ENCODE measurements at regions of chr1 and their contacts with region 1.

Region 1: DNA sequence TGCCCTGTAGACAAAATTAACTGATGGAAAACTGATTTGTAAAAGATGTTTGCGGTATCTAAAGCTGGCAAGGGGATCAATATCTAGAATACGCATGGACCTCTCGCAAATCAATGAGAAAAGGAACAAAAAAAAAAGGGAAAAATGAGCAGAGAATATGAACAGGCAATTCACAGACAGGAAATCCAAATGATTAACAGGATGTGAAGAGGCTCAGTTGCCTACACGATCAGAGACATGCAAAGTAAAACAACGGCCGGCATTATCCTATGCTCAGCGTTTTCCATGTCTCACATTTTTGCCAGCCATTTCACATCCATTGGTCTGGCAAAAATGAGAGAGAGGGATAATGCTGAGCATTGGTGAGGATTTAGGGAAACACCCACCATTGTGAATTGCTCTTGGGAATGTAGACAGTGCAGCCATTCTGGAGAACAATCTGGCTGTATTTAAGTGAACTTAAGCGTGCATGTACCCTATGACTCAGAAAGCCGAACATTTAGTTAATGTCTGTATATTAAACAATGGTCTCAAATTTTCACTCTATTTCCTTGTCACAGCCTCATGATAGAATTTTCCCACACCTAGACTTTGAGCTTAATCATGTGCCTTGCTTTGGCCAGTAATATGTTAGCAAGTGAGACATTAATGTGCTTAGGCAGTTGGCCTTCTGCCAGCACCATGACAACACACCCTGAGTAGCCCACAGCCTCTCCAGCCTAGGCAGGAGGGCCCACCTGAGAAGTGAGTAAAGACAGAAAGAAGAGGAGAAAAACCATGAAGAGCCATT is 61.0 kb upstream of the NBPF3 start:
- DNase-seq: peak in 2 of 4 experiments; percentile 31 to 64
- ATAC-seq: peak; percentile 83
- H3K4me3 ChIP-seq: no peak overlapping the region
- H3K27ac ChIP-seq: no peak overlapping the region
- H3K4me1 ChIP-seq: peaks cover 0 to 3% of the 10 kb centered on the region in 2 experiments; a peak in 1 of 5 replicates
- H3K27me3 ChIP-seq: peaks cover 4 to 7% of the 10 kb centered on the region in 2 experiments; a peak in 2 of 5 replicates
- CTCF ChIP-seq: no peak
- EP300 ChIP-seq: no peak
- POLR2A ChIP-seq: no peak
- RAD21 ChIP-seq: no peak

Region 2: DNA sequence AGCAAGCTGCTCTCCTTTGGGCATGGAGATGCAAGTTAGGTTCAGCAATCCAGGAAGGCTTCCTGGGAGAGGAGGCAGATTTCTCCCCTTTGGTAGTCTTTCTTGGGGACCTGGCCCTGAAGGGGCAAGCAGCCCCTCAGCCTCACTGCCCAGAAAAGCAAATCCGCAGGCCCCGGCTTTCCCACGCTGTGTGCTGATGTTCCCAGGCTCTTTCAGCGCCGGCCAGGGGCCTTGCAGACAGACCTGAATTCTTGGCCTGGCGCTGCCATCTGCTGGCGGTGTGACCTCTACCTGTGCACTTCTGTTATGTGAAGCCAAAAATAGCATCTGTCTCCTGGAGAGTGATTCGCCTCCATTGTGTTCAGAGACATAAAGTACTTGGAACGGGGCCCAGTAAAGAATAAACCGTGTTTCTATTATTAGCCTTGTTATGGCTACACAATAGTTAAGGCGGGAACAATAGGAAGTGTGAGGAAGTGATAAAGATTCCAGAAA is 195.1 kb after region 1 on chr1:
- CTCF ChIA-PET with region 1: no interaction called
- POLR2A ChIA-PET with region 1: no interaction called
- in situ Hi-C with region 1: no loop called
- intact Hi-C with region 1: loop called (anchors 10 kb)
- DNase-seq: peak; percentile 49 to 75 (median 60)
- ATAC-seq: peak; percentile 85
- H3K4me3 ChIP-seq: no peak overlapping the region
- H3K27ac ChIP-seq: no peak overlapping the region
- H3K4me1 ChIP-seq: peaks cover 4 to 27% of the 10 kb centered on the region in 2 experiments; a peak in 4 of 5 replicates
- H3K27me3 ChIP-seq: peaks cover 0 to 30% of the 10 kb centered on the region in 2 experiments; a peak in 1 of 5 replicates
- CTCF ChIP-seq: peak; percentile 74 to 79 (median 75)
- EP300 ChIP-seq: no peak
- POLR2A ChIP-seq: no peak
- RAD21 ChIP-seq: peak in 1 of 2 experiments; percentile 87; a peak in 3 of 4 replicates

Measured in K562 (cell line).